Aorta (tissue), 5 donors: ENCODE measurements at regions of chr3 and their contacts with region 1.

Region 1: DNA sequence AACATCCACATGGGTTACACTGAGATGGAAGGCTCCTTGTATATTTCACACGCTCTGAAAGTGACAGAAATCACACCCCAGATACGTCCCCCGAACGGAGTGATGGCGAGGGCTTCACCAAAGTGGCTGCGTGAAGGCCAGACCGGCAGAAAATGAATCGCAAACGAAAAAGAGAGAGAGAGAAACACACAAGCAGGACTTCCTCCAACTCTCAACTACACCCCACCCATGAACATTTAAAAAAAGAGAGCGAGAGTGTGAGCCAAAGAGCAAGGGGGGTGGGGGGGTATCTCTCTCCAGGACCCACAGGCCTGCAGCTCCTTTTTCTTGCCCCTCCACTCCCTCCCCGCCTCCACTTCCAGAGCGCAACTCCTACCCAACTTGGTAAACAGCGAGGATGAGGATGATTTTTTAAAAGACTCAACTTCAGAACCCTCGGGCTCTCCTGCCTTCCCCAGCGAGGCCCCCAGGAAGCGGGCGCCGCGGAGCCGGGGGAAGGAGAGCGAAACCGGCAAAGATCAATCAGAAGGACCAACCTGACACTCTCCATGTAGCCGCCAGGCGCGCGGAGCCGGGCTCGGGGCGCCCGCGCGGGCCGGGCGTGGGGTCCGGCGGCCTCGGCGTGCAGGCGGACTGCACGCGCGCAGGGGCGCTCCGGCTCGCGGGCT is 519.1 kb downstream of the FOXP1 start:
- DNase-seq: peak; percentile 71 to 78
- ATAC-seq: peak; percentile 68
- H3K4me3 ChIP-seq: peak overlapping the region; percentile 76 to 88
- H3K27ac ChIP-seq: peak overlapping the region; percentile 62 to 99
- H3K4me1 ChIP-seq: peaks cover 3 to 5% of the 10 kb centered on the region in 2 donors
- H3K27me3 ChIP-seq: no peaks in the 10 kb centered on the region

Region 2: DNA sequence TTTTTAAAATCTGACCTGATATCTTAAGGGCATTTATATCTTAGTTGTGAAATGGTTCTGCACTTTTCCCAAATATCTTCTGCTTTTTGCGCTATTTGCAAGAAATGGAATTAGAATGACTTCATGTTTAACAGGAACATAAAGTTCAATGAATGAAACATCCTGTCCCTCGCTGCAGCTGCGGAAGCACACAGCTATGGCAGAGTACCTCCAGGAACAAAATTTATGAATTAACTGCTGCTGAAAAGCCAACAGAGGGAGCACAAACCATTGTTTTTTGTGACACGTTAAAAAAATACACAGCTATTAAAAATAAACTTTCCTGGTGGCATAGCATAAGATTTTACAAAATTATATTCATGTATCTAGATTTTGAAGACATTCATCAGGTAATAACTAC is 347.6 kb before region 1 on chr3:
- intact Hi-C with region 1: loop called in 1 of 2 experiments (anchors 10 kb)
- DNase-seq: peak in 1 of 2 donors; percentile 45
- ATAC-seq: no peak
- H3K4me3 ChIP-seq: no peak overlapping the region
- H3K27ac ChIP-seq: no peak overlapping the region
- H3K4me1 ChIP-seq: no peaks in the 10 kb centered on the region
- H3K27me3 ChIP-seq: no peaks in the 10 kb centered on the region

Region 3: GRCh38 chr3:71022551-71023335 is 41.7 kb before region 1 on chr3:
- intact Hi-C with region 1: loop called (anchors 5 kb)
- DNase-seq: no peak
- ATAC-seq: peak; percentile 15
- H3K4me3 ChIP-seq: no peak overlapping the region
- H3K27ac ChIP-seq: no peak overlapping the region
- H3K4me1 ChIP-seq: peaks cover 9 to 28% of the 10 kb centered on the region in 2 donors
- H3K27me3 ChIP-seq: no peaks in the 10 kb centered on the region

Region 4: GRCh38 chr3:71247221-71247976 is 183.0 kb after region 1 on chr3:
- intact Hi-C with region 1: loop called in 1 of 2 experiments (anchors 5 kb)
- DNase-seq: no peak
- ATAC-seq: no peak
- H3K4me3 ChIP-seq: no peak overlapping the region
- H3K27ac ChIP-seq: peak overlapping the region in 1 of 2 donors; percentile 42
- H3K4me1 ChIP-seq: peaks cover 0 to 2% of the 10 kb centered on the region in 2 donors
- H3K27me3 ChIP-seq: no peaks in the 10 kb centered on the region